Cardiac septum (tissue), 1 donor: ENCODE measurements at regions of chr4 and their contacts with region 1.

Region 1: DNA sequence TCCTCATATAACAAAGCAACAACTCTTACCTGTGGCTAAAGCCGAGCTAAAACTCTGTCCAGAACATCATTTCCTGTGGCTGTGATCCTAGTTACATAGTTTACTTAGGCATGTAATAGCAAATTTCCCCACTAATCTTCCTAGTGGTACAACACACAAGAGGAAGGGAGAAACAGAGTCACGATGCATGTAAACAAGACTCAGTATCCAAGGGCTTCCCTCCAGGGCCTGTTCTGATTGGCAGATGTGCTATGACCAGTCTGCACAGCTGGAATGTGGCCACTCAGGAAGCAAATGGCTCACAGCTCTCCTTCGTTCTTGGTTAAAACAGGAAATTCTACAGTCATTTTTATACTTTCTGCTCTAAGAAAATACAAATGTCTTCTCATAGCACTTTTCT is 49.2 kb upstream of the PRSS48 start:
- DNase-seq: peak; percentile 81

Region 2: GRCh38 chr4:151175233-151175632 is 52.5 kb before region 1 on chr4:
- intact Hi-C with region 1: loop called (anchors 5 kb)
- DNase-seq: no peak